ENCODE measurements at regions of chr15 and their contacts with region 1.

Region 1: DNA sequence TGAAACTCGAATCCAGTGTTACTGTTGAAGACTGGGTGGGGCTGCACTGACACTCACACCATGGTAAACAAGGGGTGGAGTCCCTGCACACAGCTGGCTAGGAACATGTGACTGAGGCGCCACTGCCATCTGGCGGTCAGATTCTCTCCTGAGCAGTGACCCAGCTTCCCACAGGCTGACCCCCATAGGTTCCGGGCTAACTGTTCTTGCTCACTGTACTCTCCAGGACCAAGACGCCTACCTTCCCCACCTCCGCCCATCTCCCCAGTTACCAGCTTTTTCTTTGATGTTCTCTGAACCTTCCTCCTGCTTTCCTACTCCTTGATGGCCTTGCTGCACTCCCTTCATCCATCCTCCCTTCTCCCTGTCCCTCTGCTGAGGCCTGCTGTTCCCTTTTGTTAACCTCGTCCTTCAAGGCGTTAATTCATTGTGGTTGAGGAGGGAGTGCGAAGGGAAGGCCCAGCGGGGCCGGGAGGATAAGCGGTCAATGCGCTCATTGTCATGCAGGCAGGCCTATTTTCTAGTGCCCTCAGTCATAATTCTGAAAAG is 115.2 kb downstream of the ATP8B4 start:
- DNase-seq: peak; percentile 93
- ATAC-seq: peak; percentile 100

Region 2: DNA sequence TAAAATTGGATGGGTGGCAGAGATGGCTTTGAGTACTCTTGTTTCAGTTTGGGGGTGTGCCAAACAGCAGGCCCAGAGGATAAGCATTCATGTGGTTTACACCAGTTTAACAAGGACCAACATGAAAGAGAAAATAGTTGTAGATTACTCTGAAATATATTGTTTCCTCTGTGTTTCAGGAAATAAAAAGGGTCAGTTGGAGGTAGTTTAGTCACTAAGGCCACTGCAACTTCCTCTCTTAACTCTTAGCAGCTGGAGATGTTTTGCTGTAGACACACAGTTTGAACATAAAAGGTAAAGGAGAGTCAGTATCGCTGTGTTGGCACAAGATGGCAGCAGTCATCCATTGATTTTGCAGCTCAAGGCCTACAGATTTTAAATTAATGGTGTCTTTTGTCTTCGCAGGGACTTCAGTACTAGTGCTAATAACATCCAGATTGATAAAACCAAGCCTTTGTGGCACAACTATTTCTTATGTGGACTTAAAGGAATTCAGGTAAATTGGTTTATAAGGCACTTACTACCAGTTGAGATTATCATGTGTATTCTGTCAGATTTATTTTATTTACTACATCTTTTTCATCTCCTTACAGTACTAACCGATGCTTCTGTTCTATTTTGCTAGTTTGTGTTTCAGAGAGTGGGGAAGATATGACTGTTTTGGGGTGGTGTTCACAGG is 768.3 kb before region 1 on chr15:
- intact Hi-C with region 1: loop called (anchors 10 kb)
- DNase-seq: no peak
- ATAC-seq: peak; percentile 89

Region 3: DNA sequence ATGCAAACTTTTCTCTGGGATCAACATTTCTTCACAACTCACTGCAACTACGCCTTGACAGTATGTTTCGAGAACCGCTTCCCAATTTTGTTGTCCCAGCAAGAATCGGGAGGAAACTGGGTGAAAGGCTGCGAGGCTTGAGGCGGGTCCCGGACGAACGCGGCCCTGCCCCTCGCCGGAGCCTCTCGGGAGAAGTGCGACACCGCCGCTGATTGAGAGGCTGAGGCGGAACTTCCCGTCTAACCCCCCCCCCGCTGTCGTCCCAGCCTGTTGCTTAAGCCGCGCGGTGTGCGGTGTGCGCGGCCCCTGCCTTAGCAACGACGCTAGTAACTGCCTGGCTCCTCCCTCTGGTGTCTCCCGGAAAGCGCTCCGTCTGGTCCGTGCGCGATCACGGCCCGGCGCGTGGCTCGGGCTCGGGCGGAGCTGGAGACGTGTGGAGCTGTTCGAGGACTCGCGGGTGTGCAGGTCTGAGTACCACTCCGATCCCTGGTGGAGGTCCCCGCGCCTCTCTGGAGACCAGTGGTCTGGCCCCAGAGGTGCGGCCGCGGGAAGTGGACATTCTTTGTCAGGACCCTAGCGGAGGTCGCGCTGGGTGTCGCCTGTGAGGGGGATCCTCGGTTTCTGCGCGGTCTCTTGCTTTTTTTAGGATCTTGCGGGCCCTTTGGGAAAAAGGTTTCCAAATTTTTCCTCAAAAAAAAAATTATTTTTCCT is 383.0 kb before region 1 on chr15 and contains the starts of genes DTWD1 and FAM227B:
- intact Hi-C with region 1: loop called (anchors 10 kb)
- DNase-seq: peak; percentile 98
- ATAC-seq: peak; percentile 99
- total RNA-seq, gene DTWD1: 22.8 TPM
- total RNA-seq, gene FAM227B: 19.4 TPM

Region 4: GRCh38 chr15:49876401-49877038 is 127.3 kb before region 1 on chr15:
- intact Hi-C with region 1: loop called (anchors 2 kb)
- DNase-seq: no peak
- ATAC-seq: peak; percentile 81

Region 5: GRCh38 chr15:49901996-49902684 is 101.7 kb before region 1 on chr15:
- intact Hi-C with region 1: loop called (anchors 10 kb)
- DNase-seq: no peak
- ATAC-seq: no peak

Measured in Right ventricle myocardium superior (tissue), 1 donor.